ENCODE measurements at regions of chr16 and their contacts with region 1.

Region 1: GRCh38 chr16:27235055-27235937 is 32.0 kb downstream of the KDM8 start:
- DNase-seq: peak; percentile 94
- H3K4me3 Mint-ChIP-seq: peak overlapping the region; percentile 77
- H3K27ac Mint-ChIP-seq: peak overlapping the region; percentile 100
- H3K4me1 Mint-ChIP-seq: peaks cover 87% of the 10 kb centered on the region
- H3K27me3 Mint-ChIP-seq: no peaks in the 10 kb centered on the region

Region 2: DNA sequence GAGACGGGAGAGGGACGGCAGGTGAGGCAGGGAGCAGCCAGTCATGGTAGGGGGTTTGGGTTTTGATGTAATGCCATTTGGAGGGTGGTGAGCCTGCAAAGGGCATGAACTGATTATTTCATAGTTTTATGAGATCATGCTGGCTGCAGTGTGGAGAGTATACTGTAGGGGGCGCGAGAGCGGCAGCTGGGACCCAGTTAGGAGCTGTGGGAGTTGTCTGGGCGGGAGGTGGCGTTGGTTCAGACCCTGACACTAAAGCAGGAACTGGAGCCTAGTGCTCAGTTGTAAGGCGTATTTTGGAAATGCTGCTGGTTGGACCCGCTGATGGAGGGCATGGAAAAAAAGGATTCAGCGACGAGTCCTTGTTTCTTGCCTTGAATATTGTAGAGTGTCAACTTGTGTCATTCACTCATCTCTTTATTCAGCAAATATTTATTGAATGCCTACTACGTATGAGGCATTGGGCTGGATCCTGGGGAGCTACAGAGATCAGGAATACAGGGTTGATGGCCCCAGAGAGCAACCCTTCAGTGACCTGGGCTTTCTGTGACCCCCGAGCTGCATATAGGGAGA is 55.7 kb before region 1 on chr16:
- intact Hi-C with region 1: loop called (anchors 2 kb)
- DNase-seq: peak; percentile 81
- H3K4me3 Mint-ChIP-seq: no peak overlapping the region
- H3K27ac Mint-ChIP-seq: peak overlapping the region; percentile 40
- H3K4me1 Mint-ChIP-seq: peaks cover 38% of the 10 kb centered on the region
- H3K27me3 Mint-ChIP-seq: no peaks in the 10 kb centered on the region

Region 3: GRCh38 chr16:27253526-27253930 is 18.2 kb after region 1 on chr16:
- intact Hi-C with region 1: loop called (anchors 1 kb)
- DNase-seq: no peak
- H3K4me3 Mint-ChIP-seq: peak overlapping the region; percentile 54
- H3K27ac Mint-ChIP-seq: peak overlapping the region; percentile 97
- H3K4me1 Mint-ChIP-seq: peaks cover 82% of the 10 kb centered on the region
- H3K27me3 Mint-ChIP-seq: no peaks in the 10 kb centered on the region

Region 4: GRCh38 chr16:27313422-27314160 is 78.3 kb after region 1 on chr16 and contains the start of gene IL4R:
- intact Hi-C with region 1: loop called (anchors 1 kb)
- DNase-seq: peak; percentile 67
- H3K4me3 Mint-ChIP-seq: peak within 1 kb of the TSS; percentile 100
- H3K27ac Mint-ChIP-seq: peak within 1 kb of the TSS; percentile 98
- H3K4me1 Mint-ChIP-seq: peaks cover 43% of the 10 kb centered on the region
- H3K27me3 Mint-ChIP-seq: no peaks in the 10 kb centered on the region
- total RNA-seq, gene IL4R: 434 and 437 TPM in 2 replicates

Region 5: GRCh38 chr16:27367461-27368357 is 132.4 kb after region 1 on chr16:
- intact Hi-C with region 1: loop called (anchors 1 kb)
- DNase-seq: peak; percentile 81
- H3K4me3 Mint-ChIP-seq: peak overlapping the region; percentile 53
- H3K27ac Mint-ChIP-seq: peak overlapping the region; percentile 99
- H3K4me1 Mint-ChIP-seq: peaks cover 65% of the 10 kb centered on the region
- H3K27me3 Mint-ChIP-seq: no peaks in the 10 kb centered on the region